ENCODE measurements at regions of chr1 and their contacts with region 1.

Region 1: DNA sequence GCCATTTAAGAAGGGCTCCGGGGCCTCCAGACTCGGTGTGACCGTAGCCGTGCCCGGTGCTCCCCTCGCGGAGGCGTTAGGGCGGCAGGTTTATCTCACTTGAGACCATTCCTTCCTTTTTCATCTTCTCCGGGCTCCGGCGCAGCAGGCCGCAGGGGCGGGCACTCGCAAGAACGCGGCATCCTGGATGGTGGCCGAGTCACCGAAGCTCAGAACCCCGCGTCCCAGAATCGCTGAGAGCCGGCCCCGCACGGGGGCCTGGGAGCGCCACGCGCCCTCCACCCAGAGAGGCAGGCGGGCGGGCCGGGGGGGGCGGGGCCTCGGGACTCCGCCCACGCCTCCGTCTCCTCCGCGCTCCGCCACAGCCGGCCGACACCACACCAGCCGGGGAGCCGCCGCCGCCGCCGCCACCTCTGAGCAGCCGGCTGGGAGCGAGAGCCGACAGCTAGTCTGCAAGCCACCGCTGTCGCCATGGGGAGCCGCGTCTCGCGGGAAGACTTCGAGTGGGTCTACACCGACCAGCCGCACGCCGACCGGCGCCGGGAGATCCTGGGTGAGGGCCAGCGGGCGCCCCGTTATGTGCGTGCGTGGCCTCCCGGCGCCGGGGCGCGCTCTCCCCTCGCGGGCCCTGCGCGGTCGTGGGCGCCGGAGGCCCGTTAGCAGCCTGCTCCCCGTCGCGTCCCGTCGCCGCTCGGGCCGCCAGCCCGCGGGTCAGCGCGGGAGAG is at the start of gene DEGS1:
- DNase-seq: peak; percentile 87
- ATAC-seq: peak; percentile 83
- H3K4me3 Mint-ChIP-seq: peak within 1 kb of the TSS; percentile 97
- H3K27ac Mint-ChIP-seq: peak within 1 kb of the TSS; percentile 91
- H3K4me1 Mint-ChIP-seq: peaks cover 51% of the 10 kb centered on the region
- H3K27me3 Mint-ChIP-seq: no peaks in the 10 kb centered on the region
- total RNA-seq, gene DEGS1: 49.0 to 65.9 TPM

Region 2: DNA sequence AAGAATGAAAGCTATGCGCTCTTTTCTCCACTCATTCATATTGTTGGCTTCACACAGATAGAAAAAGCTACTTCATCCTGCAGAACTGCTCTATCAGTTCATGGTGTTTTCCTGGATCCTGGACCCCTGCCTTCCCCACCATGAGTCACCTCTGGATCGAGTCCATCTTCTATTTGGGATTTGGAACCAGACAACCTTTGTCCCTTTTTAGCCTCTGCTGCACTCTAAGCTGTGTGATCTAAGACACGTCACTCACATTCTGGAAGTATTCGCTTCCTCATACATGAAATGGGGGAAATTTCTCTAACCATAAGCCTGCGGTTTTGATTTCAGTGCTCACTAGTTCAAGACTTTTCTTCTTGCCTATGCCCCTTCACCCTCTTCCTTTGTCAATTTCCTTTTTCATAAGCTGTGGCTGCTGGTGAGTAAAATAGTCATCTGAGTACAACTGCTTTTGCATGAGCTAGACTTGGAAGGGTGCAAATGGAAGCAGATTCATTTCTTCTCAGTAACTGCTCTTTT is 14.1 kb before region 1 on chr1:
- CTCF ChIA-PET with region 1: interaction called, 24 read pairs
- DNase-seq: peak; percentile 58
- ATAC-seq: peak; percentile 92
- H3K4me3 Mint-ChIP-seq: peak overlapping the region; percentile 22
- H3K27ac Mint-ChIP-seq: peak overlapping the region; percentile 66
- H3K4me1 Mint-ChIP-seq: peaks cover 29% of the 10 kb centered on the region
- H3K27me3 Mint-ChIP-seq: peaks cover 6% of the 10 kb centered on the region